Activated naive CD4-positive, alpha-beta T cell treated with anti-CD3 and anti-CD28 coated beads, Interleukin-2, amount 10 ng/mL, durations not matched to agents 7 days and 5 days (primary cell): ENCODE measurements at regions of chr2 and their contacts with region 1.

Region 1: DNA sequence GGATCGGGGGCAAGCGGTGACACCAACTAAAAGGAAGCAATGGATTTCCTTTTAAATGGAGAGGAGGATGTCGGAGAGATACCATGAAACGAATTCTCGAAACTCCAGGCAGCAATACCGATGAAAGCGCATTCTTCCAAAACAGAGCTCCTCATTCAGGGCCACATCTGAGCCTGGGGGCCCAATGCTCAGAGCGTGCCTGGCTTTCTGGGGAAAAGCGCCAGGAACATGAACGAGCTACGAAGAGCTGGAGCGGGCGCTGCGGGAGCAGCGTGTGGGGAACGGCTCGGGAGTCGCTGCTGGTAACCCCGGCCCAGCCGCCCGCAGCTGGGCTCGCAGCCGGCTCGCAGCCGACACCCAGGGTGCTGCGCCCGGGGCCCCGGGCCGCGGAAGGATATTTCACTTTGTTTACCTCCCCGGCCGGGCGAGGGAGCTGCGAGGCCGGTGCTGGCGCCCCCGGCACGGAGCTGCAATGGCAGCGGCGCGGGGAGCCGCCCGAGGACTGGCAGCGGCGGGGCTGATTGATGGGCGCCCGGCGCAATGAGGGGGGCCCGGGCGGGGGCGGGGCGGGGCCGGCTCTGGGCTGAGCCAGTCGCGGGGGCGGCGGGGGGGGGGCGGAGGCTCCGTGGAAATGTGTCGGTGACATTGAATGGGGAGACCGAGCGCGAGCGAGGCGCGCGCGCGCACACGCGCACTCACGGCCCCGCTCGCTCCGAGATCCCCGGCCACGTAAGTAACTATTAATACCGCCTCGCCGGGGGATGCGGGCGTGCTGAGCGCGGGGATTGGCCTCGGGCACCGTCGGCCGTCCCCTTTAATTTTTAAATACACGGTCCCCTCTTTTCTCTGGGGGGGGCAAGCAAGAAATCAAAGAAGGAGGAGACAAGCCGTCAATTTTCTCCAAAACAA is at the start of gene TRIB2:
- DNase-seq: peak; percentile 93
- H3K4me3 Mint-ChIP-seq: peak within 1 kb of the TSS; percentile 98
- H3K27ac Mint-ChIP-seq: peak within 1 kb of the TSS; percentile 97
- H3K4me1 Mint-ChIP-seq: peaks cover 41% of the 10 kb centered on the region
- H3K27me3 Mint-ChIP-seq: peaks cover 10% of the 10 kb centered on the region

Region 2: DNA sequence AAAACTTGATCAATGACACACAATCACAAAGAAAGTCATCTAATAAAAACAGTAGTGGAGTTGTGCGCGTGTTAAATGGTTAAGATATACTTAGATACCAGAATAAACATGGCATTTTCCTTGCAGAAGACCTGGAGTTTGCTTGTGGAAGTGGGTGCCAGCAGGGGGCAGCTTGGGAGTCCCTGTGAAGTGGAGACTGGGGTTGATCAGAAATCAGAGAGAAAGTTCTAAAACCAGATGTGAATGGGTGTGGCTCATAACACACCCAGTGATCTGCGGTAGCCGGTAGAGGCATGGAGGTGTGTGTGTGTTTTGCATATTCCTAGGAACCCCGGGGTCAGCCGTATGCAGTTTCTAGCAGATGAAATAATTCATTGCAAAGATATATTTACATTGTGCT is 299.9 kb before region 1 on chr2:
- CTCF ChIA-PET with region 1: interaction called, 33 read pairs
- DNase-seq: peak; percentile 81
- H3K4me3 Mint-ChIP-seq: no peak overlapping the region
- H3K27ac Mint-ChIP-seq: peak overlapping the region; percentile 3
- H3K4me1 Mint-ChIP-seq: peaks cover 85% of the 10 kb centered on the region
- H3K27me3 Mint-ChIP-seq: no peaks in the 10 kb centered on the region

Region 3: GRCh38 chr2:12433628-12433994 is 282.9 kb before region 1 on chr2:
- CTCF ChIA-PET with region 1: interaction called, 19 read pairs
- DNase-seq: no peak
- H3K4me3 Mint-ChIP-seq: no peak overlapping the region
- H3K27ac Mint-ChIP-seq: no peak overlapping the region
- H3K4me1 Mint-ChIP-seq: peaks cover 77% of the 10 kb centered on the region
- H3K27me3 Mint-ChIP-seq: no peaks in the 10 kb centered on the region

Region 4: GRCh38 chr2:12624905-12625598 is 91.5 kb before region 1 on chr2:
- CTCF ChIA-PET with region 1: no interaction called
- DNase-seq: peak; percentile 27
- H3K4me3 Mint-ChIP-seq: no peak overlapping the region
- H3K27ac Mint-ChIP-seq: no peak overlapping the region
- H3K4me1 Mint-ChIP-seq: peaks cover 15% of the 10 kb centered on the region
- H3K27me3 Mint-ChIP-seq: peaks cover 12% of the 10 kb centered on the region

Region 5: DNA sequence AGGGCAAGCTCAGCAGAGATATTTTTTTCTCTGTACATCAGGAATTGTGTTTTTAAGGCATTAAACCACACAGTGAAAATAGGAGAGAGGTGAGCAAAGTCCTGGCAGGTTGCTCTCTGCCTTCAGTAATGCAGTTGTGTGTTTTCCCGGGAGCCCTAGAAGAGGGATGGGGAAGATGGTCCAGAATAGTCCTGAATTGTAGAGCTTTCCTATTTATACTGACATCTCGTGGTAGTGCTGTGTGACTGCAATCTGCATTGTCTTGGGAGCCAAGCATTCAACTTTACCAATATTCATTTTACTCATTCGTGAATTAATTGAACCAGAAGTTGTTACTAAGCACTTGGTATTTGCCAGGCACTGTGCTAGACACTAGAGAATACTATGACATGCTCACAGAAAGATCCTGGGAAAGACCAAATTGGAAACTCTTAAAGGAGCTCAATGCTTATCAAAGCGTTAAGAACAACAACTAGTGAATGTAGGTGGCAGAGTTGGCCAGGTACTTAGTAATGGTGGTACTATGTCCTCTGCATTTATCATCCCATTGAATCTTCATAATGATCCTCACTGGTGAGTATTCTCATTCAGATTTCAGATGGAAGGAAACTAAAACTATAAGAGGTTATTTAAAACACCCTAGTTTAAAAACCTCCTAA is 214.8 kb after region 1 on chr2:
- CTCF ChIA-PET with region 1: interaction called, 31 read pairs
- DNase-seq: peak; percentile 20
- H3K4me3 Mint-ChIP-seq: no peak overlapping the region
- H3K27ac Mint-ChIP-seq: no peak overlapping the region
- H3K4me1 Mint-ChIP-seq: peaks cover 13% of the 10 kb centered on the region
- H3K27me3 Mint-ChIP-seq: peaks cover 19% of the 10 kb centered on the region

Region 6: DNA sequence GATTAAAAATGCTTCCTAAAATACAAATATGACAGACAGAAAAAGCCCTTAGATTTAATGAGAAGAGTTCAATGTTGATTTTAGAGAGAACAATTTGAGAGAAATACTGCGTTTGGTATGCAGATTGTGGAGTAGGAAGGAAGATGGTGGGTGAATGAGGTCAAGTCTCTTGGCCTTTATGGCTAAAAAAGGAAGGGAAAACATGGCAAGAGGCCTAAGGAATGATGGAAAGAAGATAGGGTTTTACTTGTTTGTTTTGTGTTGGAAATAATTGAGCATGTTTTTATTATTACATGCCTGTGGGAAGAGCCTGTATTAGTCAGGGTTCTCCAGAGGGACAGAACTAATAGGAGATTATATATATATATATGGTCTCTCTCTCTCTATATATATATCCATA is 318.3 kb after region 1 on chr2:
- CTCF ChIA-PET with region 1: no interaction called
- DNase-seq: no peak
- H3K4me3 Mint-ChIP-seq: no peak overlapping the region
- H3K27ac Mint-ChIP-seq: no peak overlapping the region
- H3K4me1 Mint-ChIP-seq: no peaks in the 10 kb centered on the region
- H3K27me3 Mint-ChIP-seq: peaks cover 5% of the 10 kb centered on the region